ENCODE measurements at regions of chr14 and their contacts with region 1.

Region 1: GRCh38 chr14:54902521-54903420 is at the start of gene GCH1:
- DNase-seq: peak; percentile 77 to 89
- ATAC-seq: peak; percentile 69 to 83 (median 79)
- H3K4me3 ChIP-seq: peak within 1 kb of the TSS; percentile 80
- H3K4me3 Mint-ChIP-seq: peak within 1 kb of the TSS; percentile 87
- H3K27ac ChIP-seq: peak within 1 kb of the TSS; percentile 92
- H3K27ac Mint-ChIP-seq: peak within 1 kb of the TSS; percentile 87 to 90
- H3K4me1 ChIP-seq: peaks cover 18% of the 10 kb centered on the region
- H3K4me1 Mint-ChIP-seq: peaks cover 24 to 39% of the 10 kb centered on the region in 2 donors
- H3K27me3 ChIP-seq: no peaks in the 10 kb centered on the region
- H3K27me3 Mint-ChIP-seq: no peaks in the 10 kb centered on the region
- CTCF ChIP-seq: peak; percentile 64
- total RNA-seq, gene GCH1: 51.7 to 71.5 (median 52.6) TPM

Region 2: GRCh38 chr14:54257424-54257823 is 645.3 kb before region 1 on chr14:
- intact Hi-C with region 1: no loop called
- DNase-seq: no peak
- ATAC-seq: no peak
- H3K4me3 ChIP-seq: no peak overlapping the region
- H3K4me3 Mint-ChIP-seq: no peak overlapping the region
- H3K27ac ChIP-seq: no peak overlapping the region
- H3K27ac Mint-ChIP-seq: no peak overlapping the region
- H3K4me1 ChIP-seq: no peaks in the 10 kb centered on the region
- H3K4me1 Mint-ChIP-seq: no peaks in the 10 kb centered on the region
- H3K27me3 ChIP-seq: no peaks in the 10 kb centered on the region
- H3K27me3 Mint-ChIP-seq: peaks cover 6 to 8% of the 10 kb centered on the region in 2 donors
- CTCF ChIP-seq: no peak

Region 3: GRCh38 chr14:55026793-55027561 is 124.2 kb after region 1 on chr14 and contains the starts of genes SOCS4 and WDHD1:
- intact Hi-C with region 1: loop called (anchors 10 kb)
- DNase-seq: peak; percentile 96 to 98
- ATAC-seq: peak; percentile 92 to 97 (median 94)
- H3K4me3 ChIP-seq: peak within 1 kb of the TSS; percentile 83
- H3K4me3 Mint-ChIP-seq: peak within 1 kb of the TSS; percentile 94
- H3K27ac ChIP-seq: peak within 1 kb of the TSS; percentile 85
- H3K27ac Mint-ChIP-seq: peak within 1 kb of the TSS; percentile 92 to 93
- H3K4me1 ChIP-seq: no peaks in the 10 kb centered on the region
- H3K4me1 Mint-ChIP-seq: peaks cover 32 to 36% of the 10 kb centered on the region in 2 donors
- H3K27me3 ChIP-seq: no peaks in the 10 kb centered on the region
- H3K27me3 Mint-ChIP-seq: no peaks in the 10 kb centered on the region
- CTCF ChIP-seq: no peak
- total RNA-seq, gene SOCS4: 17.6 to 21.9 (median 21.9) TPM
- total RNA-seq, gene WDHD1: 4.5 to 5.4 (median 5.3) TPM

Region 4: GRCh38 chr14:55579724-55580469 is 677.1 kb after region 1 on chr14 and contains the start of gene KTN1:
- intact Hi-C with region 1: loop called (anchors 5 kb)
- DNase-seq: peak; percentile 83 to 89
- ATAC-seq: peak; percentile 88 to 95 (median 90)
- H3K4me3 ChIP-seq: peak within 1 kb of the TSS; percentile 83
- H3K4me3 Mint-ChIP-seq: peak within 1 kb of the TSS; percentile 97
- H3K27ac ChIP-seq: peak within 1 kb of the TSS; percentile 83
- H3K27ac Mint-ChIP-seq: peak within 1 kb of the TSS; percentile 90 to 91
- H3K4me1 ChIP-seq: peaks cover 18% of the 10 kb centered on the region
- H3K4me1 Mint-ChIP-seq: peaks cover 24 to 27% of the 10 kb centered on the region in 2 donors
- H3K27me3 ChIP-seq: no peaks in the 10 kb centered on the region
- H3K27me3 Mint-ChIP-seq: no peaks in the 10 kb centered on the region
- CTCF ChIP-seq: no peak
- total RNA-seq, gene KTN1: 63.1 to 96.7 (median 72.8) TPM